ENCODE measurements at regions of chr6 and their contacts with region 1.

Region 1: GRCh38 chr6:137121401-137121997 is 51.9 kb downstream of the IL22RA2 start:
- DNase-seq: no peak
- CTCF ChIP-seq: peak; percentile 14

Region 2: GRCh38 chr6:137011406-137011805 is 110.1 kb before region 1 on chr6:
- CTCF ChIA-PET with region 1: no interaction called
- POLR2A ChIA-PET with region 1: no interaction called
- DNase-seq: no peak
- CTCF ChIP-seq: no peak

Region 3: GRCh38 chr6:137056121-137056880 is 65.2 kb before region 1 on chr6:
- CTCF ChIA-PET with region 1: no interaction called
- POLR2A ChIA-PET with region 1: no interaction called
- DNase-seq: no peak
- CTCF ChIP-seq: no peak

Region 4: GRCh38 chr6:137087902-137088301 is 33.6 kb before region 1 on chr6:
- CTCF ChIA-PET with region 1: no interaction called
- POLR2A ChIA-PET with region 1: no interaction called
- DNase-seq: no peak
- CTCF ChIP-seq: no peak

Region 5: DNA sequence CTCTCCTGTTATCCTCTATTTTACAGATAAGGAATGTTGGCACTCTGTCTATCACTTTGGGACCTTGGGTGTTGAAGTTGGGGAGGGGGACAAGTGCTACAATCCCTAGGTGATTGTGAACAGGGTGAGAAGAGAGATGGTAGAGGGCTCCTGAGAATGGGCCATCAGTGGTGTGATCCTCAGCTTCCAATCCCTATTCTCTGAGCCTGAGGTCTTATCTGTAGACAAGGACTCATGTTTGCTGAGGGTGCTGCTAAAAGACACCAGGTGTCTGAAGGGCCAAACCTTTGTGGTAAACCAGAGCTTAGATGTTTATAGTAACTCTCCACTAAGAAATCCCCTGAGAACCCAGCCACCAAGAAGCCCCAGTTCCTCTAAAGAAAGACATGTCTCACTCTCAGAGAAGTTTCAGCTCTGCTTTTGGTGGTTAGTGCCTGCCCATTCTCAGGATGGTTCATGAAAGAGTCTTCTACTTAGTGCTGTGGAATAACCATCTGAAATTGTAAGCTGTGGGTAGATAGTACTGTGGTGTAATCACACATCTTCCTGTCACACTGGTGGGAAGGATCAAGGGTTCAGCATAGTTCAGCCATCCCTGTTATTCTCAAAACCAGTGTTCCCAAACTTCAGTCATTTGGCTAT is 18.5 kb before region 1 on chr6:
- CTCF ChIA-PET with region 1: interaction called, 11 read pairs
- POLR2A ChIA-PET with region 1: interaction called, 3 read pairs
- DNase-seq: peak; percentile 70
- CTCF ChIP-seq: no peak

Region 6: GRCh38 chr6:137136065-137136464 is 14.6 kb after region 1 on chr6:
- CTCF ChIA-PET with region 1: interaction called, 10 read pairs
- POLR2A ChIA-PET with region 1: no interaction called
- DNase-seq: no peak
- CTCF ChIP-seq: no peak

Region 7: DNA sequence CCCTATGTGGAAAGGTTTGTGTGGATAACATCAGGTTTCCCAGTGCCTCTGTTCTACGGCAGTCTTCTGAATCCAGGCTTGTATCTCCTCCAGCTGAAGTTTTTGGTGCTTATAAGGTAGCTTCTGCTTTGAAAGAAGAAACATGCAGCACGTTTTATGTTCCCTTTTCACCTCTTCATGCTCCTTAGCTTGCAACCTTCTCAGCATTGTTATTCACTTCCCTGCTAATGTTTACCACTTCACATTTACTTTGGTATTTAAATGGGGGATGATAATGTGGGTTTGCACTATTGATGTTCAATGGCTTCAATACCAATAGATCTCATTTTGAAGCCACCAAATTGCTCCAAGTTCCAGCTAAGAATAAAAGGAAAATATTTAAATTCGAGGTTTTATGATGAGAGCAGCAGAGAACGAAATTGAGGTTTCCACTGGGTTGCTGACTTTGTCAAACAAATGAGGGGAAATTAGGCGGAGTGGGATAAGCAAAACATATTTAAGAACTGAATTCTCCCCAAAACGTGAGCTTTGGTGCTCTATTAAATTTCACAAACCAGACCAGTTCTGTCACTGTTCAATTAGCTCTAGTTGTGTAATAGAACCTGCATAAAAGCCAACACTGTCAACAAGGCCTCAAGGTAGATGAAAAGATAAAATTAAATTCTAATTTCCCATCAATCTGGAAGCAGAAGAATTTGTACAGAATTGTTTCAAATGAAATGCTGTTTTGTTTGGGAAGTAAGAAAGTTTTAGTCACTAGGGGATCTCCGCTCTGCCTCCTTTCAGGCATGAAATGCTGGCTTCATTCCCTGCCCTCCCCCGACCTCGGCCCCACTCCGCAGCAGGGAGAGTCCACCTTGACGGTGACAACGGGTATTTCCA is 50.6 kb after region 1 on chr6:
- CTCF ChIA-PET with region 1: interaction called, 10 read pairs
- POLR2A ChIA-PET with region 1: no interaction called
- DNase-seq: peak; percentile 24
- CTCF ChIP-seq: no peak